Activated CD4-positive, alpha-beta memory T cell treated with anti-CD3 and anti-CD28 coated beads, Interleukin-2, amount 10 ng/mL, durations not matched to agents 7 days and 5 days (primary cell): ENCODE measurements at regions of chrX and their contacts with region 1.

Region 1: DNA sequence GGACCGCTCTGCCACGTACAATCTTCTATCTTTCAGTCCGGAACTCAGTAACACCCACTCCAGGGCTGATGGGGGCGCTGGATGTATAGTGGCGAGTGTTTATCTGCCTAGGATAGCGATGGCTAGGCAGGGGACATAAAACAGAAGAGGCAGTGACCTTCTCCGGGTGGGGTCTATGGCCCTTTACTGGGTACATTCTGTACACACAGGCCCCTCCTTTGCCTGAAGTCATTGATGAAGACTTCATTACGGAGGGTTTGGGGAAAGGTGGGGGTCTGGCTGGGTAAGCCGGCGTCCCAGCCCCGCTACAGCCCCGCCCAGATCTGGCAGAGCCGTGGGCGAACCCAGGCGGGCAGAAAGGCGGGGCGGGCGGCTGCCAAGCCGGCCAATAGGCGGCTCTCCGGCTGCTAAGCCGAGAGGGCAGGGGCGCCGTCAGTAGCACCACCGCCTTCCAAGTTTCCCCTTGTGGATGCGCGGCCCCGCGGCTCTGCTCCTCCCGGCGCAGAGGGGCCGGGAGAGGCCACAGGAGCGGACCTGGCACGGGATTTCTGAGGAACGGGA is at the start of gene CHST7:
- DNase-seq: peak; percentile 72
- H3K4me3 Mint-ChIP-seq: peak within 1 kb of the TSS; percentile 80
- H3K27ac Mint-ChIP-seq: peak within 1 kb of the TSS; percentile 88
- H3K4me1 Mint-ChIP-seq: peaks cover 46% of the 10 kb centered on the region
- H3K27me3 Mint-ChIP-seq: no peaks in the 10 kb centered on the region
- total RNA-seq, gene CHST7: 11.5 to 11.8 TPM

Region 2: GRCh38 chrX:46561824-46562657 is 11.4 kb before region 1 on chrX:
- CTCF ChIA-PET with region 1: interaction called, 3 read pairs
- POLR2A ChIA-PET with region 1: interaction called, 15 read pairs
- DNase-seq: no peak
- H3K4me3 Mint-ChIP-seq: no peak overlapping the region
- H3K27ac Mint-ChIP-seq: peak overlapping the region; percentile 12
- H3K4me1 Mint-ChIP-seq: peaks cover 16% of the 10 kb centered on the region
- H3K27me3 Mint-ChIP-seq: no peaks in the 10 kb centered on the region

Region 3: DNA sequence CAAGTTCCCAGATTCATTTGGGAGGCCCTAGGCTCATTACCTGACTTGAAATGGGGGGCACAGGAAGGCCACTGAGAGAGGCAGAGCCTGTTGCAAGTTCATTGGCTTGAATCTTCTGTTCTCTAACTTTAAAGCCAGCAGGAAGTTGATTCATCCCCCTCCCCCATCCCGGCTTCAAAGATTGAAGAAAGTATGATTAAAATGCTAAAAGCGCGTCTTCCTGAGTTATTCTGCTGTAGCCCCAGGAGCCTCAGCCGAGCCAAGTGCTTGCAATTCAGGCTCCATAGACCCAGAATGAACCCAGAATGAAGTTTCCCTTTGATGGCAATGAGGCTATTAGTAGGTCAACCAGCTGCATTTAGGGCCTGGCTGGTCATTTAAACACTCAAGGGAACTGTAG is 14.9 kb after region 1 on chrX:
- CTCF ChIA-PET with region 1: interaction called, 4 read pairs
- POLR2A ChIA-PET with region 1: interaction called, 12 read pairs
- DNase-seq: peak; percentile 53
- H3K4me3 Mint-ChIP-seq: peak overlapping the region; percentile 59
- H3K27ac Mint-ChIP-seq: peak overlapping the region; percentile 84
- H3K4me1 Mint-ChIP-seq: peaks cover 44% of the 10 kb centered on the region
- H3K27me3 Mint-ChIP-seq: no peaks in the 10 kb centered on the region

Region 4: GRCh38 chrX:46611658-46612362 is 38.4 kb after region 1 on chrX:
- CTCF ChIA-PET with region 1: interaction called, 3 read pairs
- POLR2A ChIA-PET with region 1: interaction called, 10 read pairs
- DNase-seq: peak; percentile 53
- H3K4me3 Mint-ChIP-seq: peak overlapping the region; percentile 34
- H3K27ac Mint-ChIP-seq: peak overlapping the region; percentile 86
- H3K4me1 Mint-ChIP-seq: peaks cover 66% of the 10 kb centered on the region
- H3K27me3 Mint-ChIP-seq: no peaks in the 10 kb centered on the region

Region 5: GRCh38 chrX:46662594-46662993 is 89.2 kb after region 1 on chrX:
- CTCF ChIA-PET with region 1: no interaction called
- POLR2A ChIA-PET with region 1: no interaction called
- DNase-seq: no peak
- H3K4me3 Mint-ChIP-seq: no peak overlapping the region
- H3K27ac Mint-ChIP-seq: no peak overlapping the region
- H3K4me1 Mint-ChIP-seq: peaks cover 20% of the 10 kb centered on the region
- H3K27me3 Mint-ChIP-seq: no peaks in the 10 kb centered on the region